Gastrocnemius medialis (tissue), 4 donors: ENCODE measurements at regions of chr1 and their contacts with region 1.

Region 1: GRCh38 chr1:17011439-17012307 is at the start of gene ATP13A2:
- DNase-seq: peak; percentile 58 to 75
- ATAC-seq: peak; percentile 88 to 90
- H3K4me3 ChIP-seq: peak within 1 kb of the TSS; percentile 75 to 87 (median 79)
- H3K27ac ChIP-seq: peak within 1 kb of the TSS; percentile 21 to 70 (median 56)
- H3K4me1 ChIP-seq: peaks cover 11 to 25% of the 10 kb centered on the region in 2 donors
- H3K27me3 ChIP-seq: no peaks in the 10 kb centered on the region
- CTCF ChIP-seq: no peak
- POLR2A ChIP-seq: peak; percentile 53 to 63
- total RNA-seq, gene ATP13A2: 17.9 to 37.0 (median 26.8) TPM

Region 2: GRCh38 chr1:17053685-17054410 is 42.2 kb after region 1 on chr1 and contains the start of gene SDHB:
- in situ Hi-C with region 1: no loop called
- intact Hi-C with region 1: loop called (anchors 5 kb)
- DNase-seq: peak; percentile 98
- ATAC-seq: peak; percentile 95 to 97
- H3K4me3 ChIP-seq: peak within 1 kb of the TSS; percentile 92 to 97 (median 94)
- H3K27ac ChIP-seq: peak within 1 kb of the TSS; percentile 96 to 97 (median 96)
- H3K4me1 ChIP-seq: peaks cover 23 to 24% of the 10 kb centered on the region in 2 donors
- H3K27me3 ChIP-seq: no peaks in the 10 kb centered on the region
- CTCF ChIP-seq: no peak
- POLR2A ChIP-seq: peak; percentile 95 to 97
- total RNA-seq, gene SDHB: 238 to 405 (median 328) TPM